Activated T-helper 1 cell treated with anti-CD3 and anti-CD28 coated beads, Interleukin-12 subunit alpha, Interleukin-12 subunit beta, Interleukin-2, Interleukin-4 antibody, amounts not matched to agents 30 ng/mL and 10 ng/mL and 1 ng/mL, durations not matched to agents 14 hours and 24 hours and 36 hours (primary cell): ENCODE measurements at regions of chr4 and their contacts with region 1.

Region 1: GRCh38 chr4:15729910-15730533 is 27.2 kb downstream of the BST1 start:
- DNase-seq: peak; percentile 16
- H3K4me3 Mint-ChIP-seq: no peak overlapping the region
- H3K27ac Mint-ChIP-seq: no peak overlapping the region
- H3K4me1 Mint-ChIP-seq: peaks cover 29% of the 10 kb centered on the region
- H3K27me3 Mint-ChIP-seq: peaks cover 3% of the 10 kb centered on the region

Region 2: DNA sequence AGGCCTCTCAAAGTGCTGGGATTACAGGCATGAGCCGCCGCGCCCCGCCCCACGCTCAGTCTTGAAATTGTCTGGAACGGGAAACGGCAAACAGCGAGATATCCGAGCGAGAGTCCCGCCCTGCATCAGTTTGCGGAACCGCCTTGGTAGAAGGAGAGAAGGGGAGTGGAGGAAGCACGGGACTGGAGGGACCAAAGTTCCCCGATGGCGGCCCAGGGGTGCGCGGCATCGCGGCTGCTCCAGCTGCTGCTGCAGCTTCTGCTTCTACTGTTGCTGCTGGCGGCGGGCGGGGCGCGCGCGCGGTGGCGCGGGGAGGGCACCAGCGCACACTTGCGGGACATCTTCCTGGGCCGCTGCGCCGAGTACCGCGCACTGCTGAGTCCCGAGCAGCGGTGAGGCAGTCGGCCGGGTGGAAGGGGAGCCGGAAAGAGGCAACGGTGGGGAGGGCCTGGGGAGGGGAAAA is 27.1 kb before region 1 on chr4 and contains the start of gene BST1:
- intact Hi-C with region 1: no loop called
- DNase-seq: peak; percentile 41
- H3K4me3 Mint-ChIP-seq: peak within 1 kb of the TSS; percentile 87
- H3K27ac Mint-ChIP-seq: no peak within 1 kb of the TSS
- H3K4me1 Mint-ChIP-seq: no peaks in the 10 kb centered on the region
- H3K27me3 Mint-ChIP-seq: peaks cover 25% of the 10 kb centered on the region
- total RNA-seq, gene BST1: 0.81 and 0.93 TPM in 2 replicates

Region 3: GRCh38 chr4:15771216-15772058 is 41.4 kb after region 1 on chr4:
- intact Hi-C with region 1: loop called (anchors 1 kb)
- DNase-seq: peak; percentile 37
- H3K4me3 Mint-ChIP-seq: peak overlapping the region; percentile 66
- H3K27ac Mint-ChIP-seq: peak overlapping the region; percentile 86
- H3K4me1 Mint-ChIP-seq: peaks cover 85% of the 10 kb centered on the region
- H3K27me3 Mint-ChIP-seq: no peaks in the 10 kb centered on the region

Region 4: DNA sequence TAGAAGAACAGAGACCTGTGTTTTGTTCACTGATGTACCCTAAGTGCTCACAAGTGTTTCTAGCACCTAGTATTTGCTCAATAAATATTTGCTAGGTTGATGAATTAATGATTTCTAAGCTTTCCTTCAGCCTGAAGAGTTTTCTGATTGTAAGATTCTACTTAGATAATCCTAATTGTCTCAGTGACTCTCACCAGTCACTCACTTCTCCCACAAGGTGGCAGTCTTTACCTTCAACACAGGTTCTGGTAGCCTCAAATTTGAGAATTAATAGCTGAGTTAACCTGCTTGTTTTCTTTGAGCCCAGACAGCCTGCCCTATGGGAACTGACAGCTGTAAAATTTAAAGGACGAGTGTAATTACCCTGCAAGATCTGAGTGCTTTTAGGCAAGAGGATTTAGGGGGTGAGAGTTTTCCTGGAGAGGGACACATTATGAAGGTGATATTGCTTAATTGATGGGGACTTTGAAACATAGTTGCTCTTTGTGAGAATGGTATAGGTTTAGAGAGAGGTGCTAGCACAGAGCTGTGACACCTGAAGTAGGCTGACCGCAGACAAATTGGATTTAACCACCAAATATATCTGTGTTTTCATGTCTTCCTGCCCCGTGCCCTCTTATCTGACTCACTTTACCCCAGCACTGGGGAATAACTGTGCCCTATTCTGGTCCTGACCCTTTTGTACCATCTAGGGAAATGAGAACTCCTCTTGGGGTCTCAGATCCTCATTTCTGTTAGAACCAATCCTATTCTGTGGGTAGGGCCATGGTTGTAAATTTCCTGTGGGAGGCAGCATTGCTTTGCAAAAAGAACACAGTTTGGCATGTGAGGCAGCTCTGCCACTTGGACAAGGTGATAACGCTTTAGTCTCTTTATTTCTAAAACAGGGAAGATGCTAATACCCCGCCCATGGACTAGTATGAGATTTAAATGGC is 75.8 kb after region 1 on chr4:
- intact Hi-C with region 1: loop called (anchors 1 kb)
- DNase-seq: no peak
- H3K4me3 Mint-ChIP-seq: no peak overlapping the region
- H3K27ac Mint-ChIP-seq: no peak overlapping the region
- H3K4me1 Mint-ChIP-seq: peaks cover 74% of the 10 kb centered on the region
- H3K27me3 Mint-ChIP-seq: no peaks in the 10 kb centered on the region

Region 5: GRCh38 chr4:15888515-15888914 is 158.5 kb after region 1 on chr4:
- intact Hi-C with region 1: no loop called
- DNase-seq: no peak
- H3K4me3 Mint-ChIP-seq: no peak overlapping the region
- H3K27ac Mint-ChIP-seq: no peak overlapping the region
- H3K4me1 Mint-ChIP-seq: no peaks in the 10 kb centered on the region
- H3K27me3 Mint-ChIP-seq: peaks cover 3% of the 10 kb centered on the region

Region 6: GRCh38 chr4:15956179-15956850 is 226.3 kb after region 1 on chr4:
- intact Hi-C with region 1: loop called (anchors 1 kb)
- DNase-seq: peak; percentile 61
- H3K4me3 Mint-ChIP-seq: no peak overlapping the region
- H3K27ac Mint-ChIP-seq: no peak overlapping the region
- H3K4me1 Mint-ChIP-seq: peaks cover 6% of the 10 kb centered on the region
- H3K27me3 Mint-ChIP-seq: peaks cover 11% of the 10 kb centered on the region